ENCODE measurements at regions of chr22 and their contacts with region 1.

Region 1: DNA sequence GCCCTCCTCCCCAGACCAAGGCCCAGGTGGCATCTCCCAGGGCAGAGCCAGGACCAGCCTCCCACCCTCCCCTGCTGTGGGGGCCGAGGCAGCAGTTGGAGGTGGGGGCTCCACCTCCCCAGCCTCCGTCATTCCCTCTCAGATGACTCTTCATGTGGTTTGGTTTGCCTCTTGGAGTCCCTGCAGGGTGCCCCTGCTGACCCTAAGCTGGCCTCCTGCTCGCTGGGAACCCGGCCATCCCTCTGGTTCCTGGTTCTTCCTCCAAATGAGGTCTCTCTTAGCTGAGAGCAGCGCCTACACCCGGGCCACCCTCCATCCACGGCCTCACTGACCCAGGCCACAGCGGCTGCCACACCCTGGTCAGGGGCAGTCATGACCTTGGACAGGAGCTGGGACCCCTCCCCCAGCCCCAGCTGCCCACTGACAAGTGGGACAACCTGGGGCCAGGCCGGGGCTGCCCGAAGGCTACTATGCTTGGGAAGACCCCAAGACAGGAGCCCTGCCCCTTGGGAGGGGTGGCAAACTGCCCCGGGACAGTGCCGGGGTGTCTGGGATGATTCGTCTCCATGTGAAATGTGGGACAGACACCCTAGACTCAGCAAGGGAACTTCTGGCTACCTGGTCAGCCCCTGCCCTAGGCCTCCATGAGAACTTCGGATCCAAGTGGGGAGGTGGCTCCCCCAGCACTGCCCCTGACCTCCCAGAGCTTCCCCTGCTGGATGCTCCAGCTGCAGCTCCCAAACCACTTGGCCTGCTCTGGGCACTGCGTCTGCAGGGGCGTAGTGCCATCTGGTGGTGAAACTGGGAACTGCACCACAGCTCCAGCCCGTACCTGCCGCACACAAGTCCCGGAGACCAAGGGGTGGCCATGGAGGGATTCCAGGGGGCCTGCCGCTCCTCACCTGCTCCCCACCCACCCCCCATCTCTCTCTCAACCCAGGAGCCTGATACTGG is 194.5 kb downstream of the IGLL1 start:
- DNase-seq: peak; percentile 17
- H3K4me3 ChIP-seq: no peak overlapping the region
- CTCF ChIP-seq: peak; percentile 99

Region 2: GRCh38 chr22:23144932-23145873 is 240.4 kb before region 1 on chr22 and contains the start of gene RAB36:
- CTCF ChIA-PET with region 1: interaction called, 10 read pairs
- POLR2A ChIA-PET with region 1: no interaction called
- DNase-seq: peak; percentile 72
- H3K4me3 ChIP-seq: peak within 1 kb of the TSS; percentile 68
- CTCF ChIP-seq: no peak

Region 3: DNA sequence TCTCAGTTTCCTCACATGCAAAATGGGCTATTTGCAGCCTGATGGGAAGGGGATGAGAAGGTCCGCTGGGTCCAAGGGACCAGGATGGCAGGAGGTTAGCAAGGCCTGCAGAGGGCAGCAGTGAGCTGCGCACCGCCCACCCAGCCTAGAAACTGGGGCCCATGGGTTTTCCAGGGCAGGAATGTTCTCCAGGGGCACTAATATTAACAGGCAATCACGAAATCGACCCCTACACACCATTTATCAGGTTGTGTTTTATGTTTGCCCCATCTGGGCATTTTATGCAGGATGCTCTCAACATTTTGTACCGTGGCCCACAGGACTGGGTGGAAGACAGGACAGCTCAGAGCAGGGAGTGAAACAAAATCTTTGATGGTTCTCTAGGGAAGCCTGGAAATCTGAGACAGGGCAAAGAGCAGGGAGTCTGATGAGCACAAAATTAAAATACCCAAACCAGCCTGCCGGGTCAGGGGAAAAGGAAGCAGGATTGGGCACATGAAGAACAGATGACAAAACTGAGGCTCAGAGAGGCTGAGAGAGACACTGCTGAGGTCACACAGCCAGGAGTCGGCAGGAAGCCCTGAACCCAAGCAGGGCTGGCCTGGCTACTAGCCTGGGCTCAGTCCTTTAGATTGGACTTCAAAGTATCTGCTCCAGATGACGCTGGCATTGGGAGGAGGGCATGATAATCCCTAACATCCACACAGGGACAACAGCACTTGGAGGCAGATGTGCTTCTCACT is 206.9 kb before region 1 on chr22:
- CTCF ChIA-PET with region 1: interaction called, 15 read pairs
- POLR2A ChIA-PET with region 1: no interaction called
- DNase-seq: no peak
- H3K4me3 ChIP-seq: no peak overlapping the region
- CTCF ChIP-seq: peak; percentile 97

Region 4: GRCh38 chr22:23281406-23282088 is 104.0 kb before region 1 on chr22:
- CTCF ChIA-PET with region 1: interaction called, 10 read pairs
- POLR2A ChIA-PET with region 1: no interaction called
- DNase-seq: no peak
- H3K4me3 ChIP-seq: no peak overlapping the region
- CTCF ChIP-seq: peak; percentile 96

Region 5: DNA sequence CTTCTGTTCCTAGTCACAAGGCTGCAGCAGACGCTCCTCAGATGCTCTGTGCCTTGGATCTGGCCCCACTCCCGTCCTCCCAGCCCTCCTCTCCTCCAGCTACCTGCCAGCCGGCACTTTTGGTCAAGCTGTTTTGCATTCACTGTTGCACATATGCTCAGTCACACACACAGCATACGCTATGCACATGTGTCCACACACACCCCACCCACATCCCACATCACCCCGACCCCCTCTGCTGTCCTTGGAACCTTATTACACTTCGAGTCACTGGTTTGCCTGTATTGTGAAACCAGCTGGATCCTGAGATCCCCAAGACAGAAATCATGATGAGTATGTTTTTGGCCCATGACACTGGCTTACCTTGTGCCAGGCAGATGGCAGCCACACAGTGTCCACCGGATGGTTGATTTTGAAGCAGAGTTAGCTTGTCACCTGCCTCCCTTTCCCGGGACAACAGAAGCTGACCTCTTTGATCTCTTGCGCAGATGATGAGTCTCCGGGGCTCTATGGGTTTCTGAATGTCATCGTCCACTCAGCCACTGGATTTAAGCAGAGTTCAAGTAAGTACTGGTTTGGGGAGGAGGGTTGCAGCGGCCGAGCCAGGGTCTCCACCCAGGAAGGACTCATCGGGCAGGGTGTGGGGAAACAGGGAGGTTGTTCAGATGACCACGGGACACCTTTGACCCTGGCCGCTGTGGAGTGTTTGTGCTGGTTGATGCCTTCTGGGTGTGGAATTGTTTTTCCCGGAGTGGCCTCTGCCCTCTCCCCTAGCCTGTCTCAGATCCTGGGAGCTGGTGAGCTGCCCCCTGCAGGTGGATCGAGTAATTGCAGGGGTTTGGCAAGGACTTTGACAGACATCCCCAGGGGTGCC is 95.5 kb before region 1 on chr22:
- CTCF ChIA-PET with region 1: interaction called, 11 read pairs
- POLR2A ChIA-PET with region 1: no interaction called
- DNase-seq: no peak
- H3K4me3 ChIP-seq: no peak overlapping the region
- CTCF ChIP-seq: peak; percentile 91

Region 6: GRCh38 chr22:23315341-23315917 is 70.1 kb before region 1 on chr22:
- CTCF ChIA-PET with region 1: interaction called, 17 read pairs
- POLR2A ChIA-PET with region 1: no interaction called
- DNase-seq: no peak
- H3K4me3 ChIP-seq: no peak overlapping the region
- CTCF ChIP-seq: peak; percentile 48

Region 7: GRCh38 chr22:23395530-23396361 is 10.2 kb after region 1 on chr22:
- CTCF ChIA-PET with region 1: interaction called, 18 read pairs
- POLR2A ChIA-PET with region 1: no interaction called
- DNase-seq: no peak
- H3K4me3 ChIP-seq: no peak overlapping the region
- CTCF ChIP-seq: no peak

Measured in AG04449 (cell line).